Prostate gland (tissue), 2 donors: ENCODE measurements at regions of chr22 and their contacts with region 1.

Region 1: DNA sequence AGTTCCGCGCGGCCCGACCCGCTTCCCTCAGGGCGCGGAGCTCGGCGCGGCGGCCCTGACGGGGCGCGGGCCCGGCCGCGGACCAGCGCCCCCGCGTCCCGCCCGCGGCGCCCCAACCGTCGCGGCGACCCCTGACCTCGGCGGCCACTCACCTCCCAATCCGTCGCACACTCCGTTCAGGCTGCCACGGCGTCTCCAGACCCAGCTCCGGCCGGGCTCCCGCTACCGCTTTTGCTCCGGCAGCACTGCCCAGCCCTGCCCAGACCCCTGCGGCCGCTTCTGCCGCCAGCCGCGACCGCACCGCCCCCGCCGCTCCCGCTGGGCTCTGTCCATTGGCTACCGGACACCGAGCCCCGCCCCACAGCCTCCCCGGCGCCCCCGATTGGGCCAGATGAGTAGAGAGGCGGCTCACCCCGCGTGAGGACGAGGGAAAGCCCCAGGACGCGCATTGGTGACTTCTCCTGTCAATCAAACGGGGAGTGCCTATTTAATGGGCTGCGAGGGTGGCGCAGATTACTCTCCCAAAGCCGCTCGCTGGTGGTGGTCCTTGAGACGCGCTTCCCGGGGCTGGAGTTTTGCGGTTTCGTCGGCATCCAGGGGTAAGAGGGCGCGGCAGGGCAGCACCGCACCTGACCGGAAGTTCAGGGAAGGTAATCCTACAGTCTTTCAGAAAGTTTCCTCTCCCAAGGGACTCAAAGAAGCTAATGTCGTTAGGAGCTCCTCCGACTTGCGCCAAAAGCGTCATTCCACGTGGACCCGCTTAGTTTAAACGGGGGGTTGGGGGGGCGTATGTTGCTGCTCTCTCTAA is at the start of gene PACSIN2:
- DNase-seq: peak; percentile 100
- H3K4me3 ChIP-seq: peak within 1 kb of the TSS; percentile 90 to 93
- H3K27ac ChIP-seq: peak within 1 kb of the TSS; percentile 87 to 89
- H3K4me1 ChIP-seq: no peaks in the 10 kb centered on the region
- H3K27me3 ChIP-seq: no peaks in the 10 kb centered on the region
- CTCF ChIP-seq: peak in 1 of 4 experiments; percentile 17
- POLR2A ChIP-seq: peak; percentile 96
- total RNA-seq, gene PACSIN2: 78.0 to 87.1 TPM

Region 2: GRCh38 chr22:42780070-42780540 is 235.0 kb before region 1 on chr22:
- intact Hi-C with region 1: loop called (anchors 10 kb)
- DNase-seq: peak; percentile 94
- H3K4me3 ChIP-seq: no peak overlapping the region
- H3K27ac ChIP-seq: peak overlapping the region in 1 of 2 donors; percentile 49
- H3K4me1 ChIP-seq: no peaks in the 10 kb centered on the region
- H3K27me3 ChIP-seq: no peaks in the 10 kb centered on the region
- CTCF ChIP-seq: peak; percentile 71 to 98 (median 92)
- POLR2A ChIP-seq: no peak

Region 3: DNA sequence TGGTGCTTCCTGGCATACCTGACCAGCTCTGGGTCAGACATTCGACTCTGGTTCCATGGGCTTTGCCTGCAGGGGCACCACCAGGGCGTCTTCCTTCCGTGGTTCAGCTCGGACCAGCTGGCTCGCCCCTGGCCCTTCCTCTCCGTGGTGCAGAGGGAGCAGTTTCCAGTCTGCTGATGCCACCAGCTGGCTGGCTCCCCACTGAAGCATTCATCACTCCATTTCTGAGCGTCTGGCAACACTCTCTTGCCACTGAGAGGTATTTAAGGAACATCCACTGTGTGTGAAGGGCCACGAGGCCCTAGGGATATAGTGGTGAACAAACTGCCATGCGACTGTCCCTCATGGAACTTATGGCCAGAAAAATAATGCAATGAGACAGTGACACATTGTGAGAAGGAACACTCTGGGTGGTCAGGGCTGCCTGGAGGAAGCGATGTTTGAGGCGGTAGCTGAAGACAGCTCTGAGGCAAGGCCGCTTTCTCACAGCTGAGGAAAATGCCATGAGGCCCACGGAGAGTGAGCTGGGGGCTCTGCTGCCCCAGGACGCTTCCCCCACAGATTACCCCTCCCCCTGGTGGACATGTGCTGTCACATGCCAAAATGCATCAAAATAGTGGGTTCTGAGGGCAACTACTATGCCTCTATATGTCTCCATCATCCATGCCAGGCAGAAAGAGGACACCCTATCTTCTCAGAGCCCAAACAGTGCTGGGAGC is 113.1 kb before region 1 on chr22:
- intact Hi-C with region 1: loop called (anchors 5 kb)
- DNase-seq: no peak
- H3K4me3 ChIP-seq: no peak overlapping the region
- H3K27ac ChIP-seq: no peak overlapping the region
- H3K4me1 ChIP-seq: peaks cover 7% of the 10 kb centered on the region
- H3K27me3 ChIP-seq: no peaks in the 10 kb centered on the region
- CTCF ChIP-seq: peak in 1 of 4 experiments; percentile 7
- POLR2A ChIP-seq: no peak

Region 4: DNA sequence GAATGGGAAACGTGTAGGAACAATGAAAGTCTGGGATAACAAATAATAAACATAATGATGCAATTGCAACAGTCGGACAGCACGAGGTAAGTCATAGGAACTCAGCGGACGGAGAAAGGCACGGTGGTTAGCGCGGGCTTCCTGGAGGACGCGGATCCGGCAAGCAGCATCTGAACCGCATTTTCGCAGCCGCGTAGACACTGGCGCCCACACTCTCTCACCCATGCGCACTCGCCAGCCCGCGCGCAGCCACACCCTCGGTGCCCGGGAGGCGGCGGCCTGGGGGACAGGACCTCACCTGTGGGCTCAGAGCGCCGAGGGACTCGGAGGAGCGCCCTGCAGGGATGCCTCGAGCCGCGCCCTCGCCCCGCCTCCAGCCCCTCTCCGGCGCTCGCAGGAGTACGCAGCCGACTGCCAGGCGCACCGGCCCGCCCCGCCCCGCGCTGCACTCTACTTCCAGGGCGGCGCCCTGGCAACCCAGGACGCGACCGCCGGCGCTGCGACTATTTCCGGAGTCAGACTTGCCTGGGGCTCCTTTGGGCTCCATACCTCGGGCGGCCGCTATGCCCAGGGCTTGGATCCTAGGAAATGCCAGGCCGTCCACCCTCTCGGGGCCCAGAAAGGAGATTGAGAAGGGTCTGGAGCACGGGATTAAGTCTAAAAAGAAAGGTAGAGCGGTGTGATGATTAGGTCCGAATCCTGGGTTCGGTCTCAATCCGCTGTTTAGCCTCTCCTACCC is 74.1 kb after region 1 on chr22 and contains the start of gene TTLL1:
- intact Hi-C with region 1: no loop called
- DNase-seq: peak; percentile 76
- H3K4me3 ChIP-seq: peak within 1 kb of the TSS; percentile 69 to 74
- H3K27ac ChIP-seq: peak within 1 kb of the TSS; percentile 67 to 69
- H3K4me1 ChIP-seq: peaks cover 4% of the 10 kb centered on the region
- H3K27me3 ChIP-seq: no peaks in the 10 kb centered on the region
- CTCF ChIP-seq: peak in 2 of 4 experiments; percentile 25 to 33
- POLR2A ChIP-seq: peak; percentile 57
- total RNA-seq, gene TTLL1: 8.8 to 22.3 TPM